Endothelial cell of umbilical vein (primary cell): ENCODE measurements at regions of chr12 and their contacts with region 1.

Region 1: GRCh38 chr12:51341259-51342007 is 5.0 kb downstream of the CELA1 start:
- DNase-seq: peak; percentile 81
- H3K4me3 ChIP-seq: peak overlapping the region in 1 of 3 experiments; percentile 13
- H3K27ac ChIP-seq: no peak overlapping the region
- H3K4me1 ChIP-seq: no peaks in the 10 kb centered on the region
- H3K27me3 ChIP-seq: no peaks in the 10 kb centered on the region
- CTCF ChIP-seq: peak; percentile 85 to 99
- POLR2A ChIP-seq: no peak

Region 2: GRCh38 chr12:50986966-50987737 is 354.3 kb before region 1 on chr12:
- CTCF ChIA-PET with region 1: interaction called, 18 read pairs
- POLR2A ChIA-PET with region 1: no interaction called
- dilution Hi-C with region 1: no loop called
- intact Hi-C with region 1: no loop called
- DNase-seq: peak; percentile 81
- H3K4me3 ChIP-seq: no peak overlapping the region
- H3K27ac ChIP-seq: peak overlapping the region; percentile 15
- H3K4me1 ChIP-seq: peaks cover 41% of the 10 kb centered on the region
- H3K27me3 ChIP-seq: no peaks in the 10 kb centered on the region
- CTCF ChIP-seq: peak; percentile 28 to 53
- POLR2A ChIP-seq: no peak

Region 3: GRCh38 chr12:51065530-51065929 is 275.9 kb before region 1 on chr12:
- CTCF ChIA-PET with region 1: interaction called, 10 read pairs
- POLR2A ChIA-PET with region 1: no interaction called
- dilution Hi-C with region 1: no loop called
- intact Hi-C with region 1: no loop called
- DNase-seq: no peak
- H3K4me3 ChIP-seq: no peak overlapping the region
- H3K27ac ChIP-seq: no peak overlapping the region
- H3K4me1 ChIP-seq: no peaks in the 10 kb centered on the region
- H3K27me3 ChIP-seq: no peaks in the 10 kb centered on the region
- CTCF ChIP-seq: no peak
- POLR2A ChIP-seq: no peak

Region 4: DNA sequence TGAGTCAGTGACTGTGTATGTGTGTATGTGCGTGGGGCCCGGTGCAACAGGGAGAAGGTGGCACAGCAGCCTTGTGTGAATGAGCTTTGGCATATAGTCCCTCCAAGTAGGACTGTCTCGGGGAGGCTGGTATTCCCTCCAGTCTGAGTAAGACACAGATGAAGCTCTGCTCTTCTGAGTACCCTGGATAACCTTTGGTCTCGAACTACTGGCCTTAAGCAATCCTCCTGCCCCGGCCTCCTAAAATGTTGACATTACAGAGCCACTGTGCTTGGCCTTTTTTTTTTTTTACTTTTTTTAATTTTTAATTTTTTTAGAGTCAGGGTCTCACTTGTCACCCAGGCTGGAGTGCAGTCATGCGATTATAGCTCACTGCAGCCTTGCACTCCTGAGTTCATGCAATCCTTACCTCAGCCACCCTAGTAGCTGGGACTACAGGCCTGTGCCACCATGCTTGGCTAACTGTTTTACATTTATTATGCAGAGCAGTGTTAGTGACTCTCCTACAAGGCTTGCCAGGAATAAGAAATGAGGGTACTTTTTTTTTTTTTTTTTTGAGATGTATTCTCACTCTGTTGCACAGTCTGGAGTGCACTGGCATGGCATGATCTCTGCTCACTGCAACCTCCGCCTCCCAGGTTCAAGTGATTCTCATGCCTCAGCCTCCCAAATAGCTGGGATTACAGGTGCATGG is 112.2 kb before region 1 on chr12:
- CTCF ChIA-PET with region 1: interaction called, 12 read pairs
- POLR2A ChIA-PET with region 1: no interaction called
- dilution Hi-C with region 1: no loop called
- intact Hi-C with region 1: no loop called
- DNase-seq: no peak
- H3K4me3 ChIP-seq: no peak overlapping the region
- H3K27ac ChIP-seq: no peak overlapping the region
- H3K4me1 ChIP-seq: no peaks in the 10 kb centered on the region
- H3K27me3 ChIP-seq: no peaks in the 10 kb centered on the region
- CTCF ChIP-seq: no peak
- POLR2A ChIP-seq: no peak

Region 5: GRCh38 chr12:51262758-51263177 is 78.7 kb before region 1 on chr12:
- CTCF ChIA-PET with region 1: interaction called, 35 read pairs
- POLR2A ChIA-PET with region 1: no interaction called
- dilution Hi-C with region 1: no loop called
- intact Hi-C with region 1: loop called (anchors 1 kb)
- DNase-seq: peak; percentile 63
- H3K4me3 ChIP-seq: no peak overlapping the region
- H3K27ac ChIP-seq: no peak overlapping the region
- H3K4me1 ChIP-seq: peaks cover 2% of the 10 kb centered on the region
- H3K27me3 ChIP-seq: no peaks in the 10 kb centered on the region
- CTCF ChIP-seq: peak; percentile 38 to 61
- POLR2A ChIP-seq: no peak

Region 6: DNA sequence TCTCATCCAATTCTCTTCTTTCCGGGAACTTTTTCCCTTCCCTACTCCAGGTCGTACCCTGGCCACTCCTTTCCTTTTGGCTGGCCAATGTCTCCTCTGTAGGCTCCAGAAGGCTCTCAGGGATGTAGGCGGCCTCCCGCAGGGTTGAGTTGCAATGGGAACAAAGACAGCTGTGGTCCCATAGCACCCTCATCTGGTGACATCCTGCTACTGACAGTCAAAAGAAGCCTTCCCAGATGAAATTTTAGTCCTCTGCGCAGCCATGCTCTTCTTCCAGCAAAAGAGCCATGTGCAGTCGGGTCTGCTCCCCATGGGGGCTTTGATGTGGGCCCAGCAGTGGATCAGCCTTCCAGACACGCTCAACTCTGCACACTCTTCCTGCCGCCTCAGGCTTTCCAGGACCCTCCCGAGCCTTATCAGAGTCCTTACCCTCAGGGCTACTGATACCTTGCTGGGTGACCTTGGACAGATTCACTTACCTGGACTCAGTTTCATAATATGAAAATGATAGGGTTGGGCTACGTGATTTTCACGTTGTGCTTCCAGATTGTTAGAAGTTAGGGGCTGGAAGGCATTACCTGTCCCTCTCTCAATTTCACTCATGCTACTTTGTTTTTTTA is 10.6 kb after region 1 on chr12:
- CTCF ChIA-PET with region 1: interaction called, 33 read pairs
- POLR2A ChIA-PET with region 1: no interaction called
- dilution Hi-C with region 1: no loop called
- intact Hi-C with region 1: no loop called
- DNase-seq: peak; percentile 66
- H3K4me3 ChIP-seq: no peak overlapping the region
- H3K27ac ChIP-seq: no peak overlapping the region
- H3K4me1 ChIP-seq: no peaks in the 10 kb centered on the region
- H3K27me3 ChIP-seq: no peaks in the 10 kb centered on the region
- CTCF ChIP-seq: peak; percentile 66 to 80
- POLR2A ChIP-seq: peak; percentile 24